Panc1 (cell line): ENCODE measurements at regions of chr14 and their contacts with region 1.

Region 1: GRCh38 chr14:64340560-64341196 is 46.5 kb upstream of the ESR2 start:
- DNase-seq: no peak
- ATAC-seq: no peak
- H3K4me3 ChIP-seq: no peak overlapping the region
- H3K27ac ChIP-seq: no peak overlapping the region
- H3K4me1 ChIP-seq: peaks cover 9% of the 10 kb centered on the region
- H3K27me3 ChIP-seq: no peaks in the 10 kb centered on the region
- CTCF ChIP-seq: no peak

Region 2: DNA sequence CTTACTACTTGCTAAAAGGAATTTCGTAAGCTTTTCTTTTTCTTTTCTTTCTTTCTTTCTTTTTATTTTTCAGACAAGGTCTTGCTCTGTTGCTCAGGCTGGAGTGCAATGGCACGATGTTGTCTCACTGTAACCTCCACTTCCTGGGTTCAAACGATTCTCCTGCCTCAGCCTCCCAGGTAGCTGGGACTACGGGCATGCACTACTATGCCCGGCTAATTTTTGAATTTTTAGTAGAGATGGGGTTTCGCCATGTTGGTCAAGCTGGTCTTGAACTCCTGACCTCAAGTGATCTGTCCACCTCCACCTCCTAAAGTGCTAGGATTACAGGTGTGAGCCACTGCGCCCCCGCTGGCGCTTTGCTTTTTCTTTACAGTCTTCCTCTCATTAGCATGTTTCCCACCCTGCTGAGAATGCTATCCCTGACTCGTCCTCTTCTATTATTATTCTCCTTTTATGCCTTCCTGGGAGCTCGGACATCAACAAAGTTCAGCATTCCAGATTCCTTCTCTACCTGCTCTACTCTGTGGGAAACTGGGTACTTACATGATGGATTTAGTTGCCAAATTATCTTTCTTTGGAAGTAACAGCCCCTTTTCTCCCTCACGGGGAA is 50.5 kb after region 1 on chr14:
- CTCF ChIA-PET with region 1: interaction called, 3 read pairs
- POLR2A ChIA-PET with region 1: no interaction called
- in situ Hi-C with region 1: no loop called
- intact Hi-C with region 1: loop called (anchors 10 kb)
- DNase-seq: no peak
- ATAC-seq: no peak
- H3K4me3 ChIP-seq: no peak overlapping the region
- H3K27ac ChIP-seq: no peak overlapping the region
- H3K4me1 ChIP-seq: peaks cover 3% of the 10 kb centered on the region; the same call in 1 of the 2 replicates
- H3K27me3 ChIP-seq: no peaks in the 10 kb centered on the region
- CTCF ChIP-seq: no peak

Region 3: DNA sequence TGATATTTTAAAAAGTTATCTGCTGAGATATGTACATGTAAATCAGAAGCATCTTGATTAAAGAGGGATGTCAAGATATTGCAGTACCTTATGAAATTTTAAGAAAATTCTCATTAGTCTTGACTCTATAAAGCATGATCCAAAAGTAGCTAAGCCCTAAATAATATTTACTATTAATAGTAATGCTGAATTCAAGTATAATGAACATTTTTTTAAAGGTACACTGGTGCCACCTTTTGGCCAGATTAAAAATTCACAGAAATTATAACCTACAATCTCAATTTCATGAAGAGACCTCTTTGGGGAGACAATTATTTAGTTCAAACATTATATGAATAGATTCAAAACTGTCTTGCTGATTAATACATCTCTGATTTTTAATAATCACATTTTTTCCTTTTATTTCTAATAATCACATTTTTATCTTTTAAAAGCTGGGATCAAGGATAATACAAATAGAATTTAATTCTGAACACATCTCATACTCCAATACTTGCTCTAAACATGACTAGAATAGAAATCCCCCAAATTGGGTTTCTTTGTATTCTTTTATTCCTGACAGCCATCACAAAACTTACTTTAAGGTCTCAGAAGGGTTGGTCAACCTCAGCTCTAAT is 138.1 kb after region 1 on chr14:
- CTCF ChIA-PET with region 1: interaction called, 3 read pairs
- POLR2A ChIA-PET with region 1: no interaction called
- in situ Hi-C with region 1: no loop called
- intact Hi-C with region 1: loop called (anchors 10 kb)
- DNase-seq: no peak
- ATAC-seq: no peak
- H3K4me3 ChIP-seq: no peak overlapping the region
- H3K27ac ChIP-seq: no peak overlapping the region
- H3K4me1 ChIP-seq: no peaks in the 10 kb centered on the region
- H3K27me3 ChIP-seq: no peaks in the 10 kb centered on the region
- CTCF ChIP-seq: peak; percentile 30; the same call in 1 of the 2 replicates

Region 4: DNA sequence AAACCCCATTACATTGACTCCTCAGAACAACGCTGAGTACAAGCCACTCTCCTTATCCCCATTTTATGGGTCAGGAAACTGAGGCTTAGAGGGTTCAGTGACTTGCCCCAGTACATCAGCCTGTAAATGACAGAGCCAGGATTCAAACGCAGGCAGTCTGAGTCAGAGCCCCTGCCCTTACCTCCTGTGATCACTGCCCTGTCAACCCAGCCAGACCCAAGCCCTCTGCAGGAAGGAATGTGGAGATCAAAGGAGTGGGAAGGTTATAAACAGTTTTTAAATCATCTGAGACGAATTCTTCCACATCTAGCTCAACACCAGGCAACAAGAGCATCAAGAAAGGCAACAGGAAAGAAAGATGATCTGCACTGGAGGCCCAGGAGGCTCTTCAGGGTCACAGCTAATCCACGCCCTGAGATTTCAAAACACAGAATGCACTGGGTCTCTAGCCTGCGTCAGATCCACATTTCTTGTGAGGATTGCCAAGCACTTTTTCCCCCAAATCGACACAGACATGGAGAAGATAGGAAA is 500.5 kb after region 1 on chr14:
- CTCF ChIA-PET with region 1: no interaction called
- POLR2A ChIA-PET with region 1: no interaction called
- in situ Hi-C with region 1: no loop called
- intact Hi-C with region 1: no loop called
- DNase-seq: no peak
- ATAC-seq: 0 out of 2 replicates have a peak, but pooled peaks have one; percentile 45
- H3K4me3 ChIP-seq: no peak overlapping the region
- H3K27ac ChIP-seq: no peak overlapping the region
- H3K4me1 ChIP-seq: peaks cover 3% of the 10 kb centered on the region; the same call in 1 of the 2 replicates
- H3K27me3 ChIP-seq: peaks cover 19% of the 10 kb centered on the region
- CTCF ChIP-seq: peak; percentile 10; the same call in 1 of the 2 replicates